Right ventricle myocardium superior (tissue), 1 donor: ENCODE measurements at regions of chr11 and their contacts with region 1.

Region 1: GRCh38 chr11:65506770-65507505 is 8.1 kb downstream of the MALAT1 start:
- DNase-seq: no peak
- ATAC-seq: peak; percentile 33

Region 2: DNA sequence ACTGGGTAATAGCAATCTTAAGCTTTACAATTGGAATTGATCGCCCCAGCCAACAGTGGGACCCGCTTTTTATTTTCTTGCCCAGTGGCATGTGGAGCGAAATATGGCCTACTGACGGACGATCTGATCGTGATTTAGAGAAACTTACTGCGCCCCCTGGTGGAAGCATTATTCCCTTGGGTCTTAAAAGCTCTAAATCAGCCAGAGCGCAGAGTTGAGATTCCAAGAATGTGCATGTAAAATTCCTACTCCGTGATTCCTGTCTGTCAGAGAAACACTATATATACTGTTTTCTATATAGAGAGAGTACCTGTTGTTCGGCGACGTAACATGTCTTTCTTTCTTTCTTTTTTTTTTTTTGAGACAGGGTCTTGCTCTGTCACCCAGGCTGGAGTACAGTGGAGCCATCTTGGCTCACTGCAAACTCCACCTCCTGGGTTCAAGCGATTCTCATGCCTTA is 177.0 kb before region 1 on chr11:
- intact Hi-C with region 1: no loop called
- DNase-seq: peak; percentile 72
- ATAC-seq: peak; percentile 41

Region 3: DNA sequence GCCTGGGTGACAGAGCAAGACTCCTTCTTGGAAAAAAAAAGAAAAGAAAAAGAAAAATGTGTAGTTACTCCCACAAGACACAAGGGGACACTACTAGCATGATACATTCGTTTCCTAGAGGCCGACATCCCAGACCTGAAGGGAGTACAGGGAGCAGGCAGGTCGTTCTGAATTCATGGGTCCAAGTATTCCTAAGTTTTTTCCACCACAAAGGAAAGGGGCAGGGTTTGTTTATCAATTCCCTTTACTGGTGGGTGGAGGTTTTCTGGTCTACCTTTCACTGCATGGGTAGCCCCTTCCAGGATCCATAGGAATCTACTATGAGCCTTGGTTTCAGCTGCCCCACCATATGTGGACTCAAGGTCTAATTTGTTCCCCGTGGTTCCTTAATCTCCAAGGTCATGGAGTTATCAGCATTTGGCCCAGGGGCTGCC is 140.6 kb before region 1 on chr11:
- intact Hi-C with region 1: loop called (anchors 2 kb)
- DNase-seq: no peak
- ATAC-seq: peak; percentile 77

Region 4: GRCh38 chr11:65471410-65471762 is 35.6 kb before region 1 on chr11:
- intact Hi-C with region 1: loop called (anchors 5 kb)
- DNase-seq: peak; percentile 84
- ATAC-seq: peak; percentile 86